ENCODE measurements at regions of chr20 and their contacts with region 1.

Region 1: GRCh38 chr20:64119681-64120341 is 12.4 kb upstream of the NPBWR2 start:
- DNase-seq: peak; percentile 57
- H3K4me3 ChIP-seq: no peak overlapping the region
- H3K27ac ChIP-seq: no peak overlapping the region
- H3K4me1 ChIP-seq: peaks cover 0 to 8% (median 5%) of the 10 kb centered on the region in 4 donors
- H3K27me3 ChIP-seq: peaks cover 0 to 25% (median 11%) of the 10 kb centered on the region in 3 donors
- CTCF ChIP-seq: no peak
- EP300 ChIP-seq: no peak
- POLR2A ChIP-seq: no peak

Region 2: DNA sequence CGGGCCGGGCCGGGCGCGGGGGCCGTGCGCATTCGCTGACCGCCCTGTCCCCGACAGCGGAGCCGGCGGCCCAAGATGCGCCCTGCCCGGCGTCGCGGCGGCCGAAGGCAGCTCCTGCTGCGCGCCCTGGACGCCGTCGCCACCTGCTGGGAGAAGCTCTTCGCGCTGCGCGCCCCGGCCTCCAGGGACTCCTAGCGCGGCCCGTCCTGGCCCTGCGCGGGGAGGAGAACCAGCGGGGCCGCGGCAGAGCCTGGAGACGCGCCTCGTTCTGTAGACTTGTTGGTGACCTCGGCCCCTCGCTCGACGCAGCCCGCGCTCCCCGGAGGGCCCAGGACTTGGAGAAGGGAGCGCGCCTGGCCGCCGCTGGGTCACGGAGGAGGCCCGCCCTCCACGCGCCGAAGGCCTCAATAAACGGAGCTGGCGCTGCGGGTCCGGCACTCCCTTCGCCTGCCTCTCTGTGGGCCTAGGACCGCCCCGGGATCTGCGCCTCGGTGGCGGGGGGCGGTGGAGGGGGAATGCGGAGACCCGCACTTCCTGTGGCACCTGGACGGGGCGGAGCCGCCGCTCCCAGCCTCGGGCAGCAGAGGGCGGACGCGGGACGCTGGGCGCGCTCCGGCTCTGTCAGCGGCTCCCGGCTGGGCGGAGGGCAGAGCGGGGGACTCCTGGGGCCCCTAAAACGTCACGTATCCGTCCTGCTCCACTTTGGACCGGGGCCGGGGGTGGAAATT is 81.1 kb before region 1 on chr20:
- intact Hi-C with region 1: loop called (anchors 2 kb)
- DNase-seq: peak; percentile 80
- H3K4me3 ChIP-seq: peak overlapping the region; percentile 17 to 54 (median 47)
- H3K27ac ChIP-seq: peak overlapping the region in 3 of 4 donors; percentile 38 to 58 (median 58)
- H3K4me1 ChIP-seq: peaks cover 0 to 40% (median 33%) of the 10 kb centered on the region in 4 donors
- H3K27me3 ChIP-seq: peaks cover 44 to 73% (median 69%) of the 10 kb centered on the region in 3 donors
- CTCF ChIP-seq: peak; percentile 42 to 69 (median 66)
- EP300 ChIP-seq: no peak
- POLR2A ChIP-seq: no peak